Activated CD4-positive, alpha-beta memory T cell treated with anti-CD3 and anti-CD28 coated beads for 36 hours (primary cell): ENCODE measurements at regions of chr3 and their contacts with region 1.

Region 1: DNA sequence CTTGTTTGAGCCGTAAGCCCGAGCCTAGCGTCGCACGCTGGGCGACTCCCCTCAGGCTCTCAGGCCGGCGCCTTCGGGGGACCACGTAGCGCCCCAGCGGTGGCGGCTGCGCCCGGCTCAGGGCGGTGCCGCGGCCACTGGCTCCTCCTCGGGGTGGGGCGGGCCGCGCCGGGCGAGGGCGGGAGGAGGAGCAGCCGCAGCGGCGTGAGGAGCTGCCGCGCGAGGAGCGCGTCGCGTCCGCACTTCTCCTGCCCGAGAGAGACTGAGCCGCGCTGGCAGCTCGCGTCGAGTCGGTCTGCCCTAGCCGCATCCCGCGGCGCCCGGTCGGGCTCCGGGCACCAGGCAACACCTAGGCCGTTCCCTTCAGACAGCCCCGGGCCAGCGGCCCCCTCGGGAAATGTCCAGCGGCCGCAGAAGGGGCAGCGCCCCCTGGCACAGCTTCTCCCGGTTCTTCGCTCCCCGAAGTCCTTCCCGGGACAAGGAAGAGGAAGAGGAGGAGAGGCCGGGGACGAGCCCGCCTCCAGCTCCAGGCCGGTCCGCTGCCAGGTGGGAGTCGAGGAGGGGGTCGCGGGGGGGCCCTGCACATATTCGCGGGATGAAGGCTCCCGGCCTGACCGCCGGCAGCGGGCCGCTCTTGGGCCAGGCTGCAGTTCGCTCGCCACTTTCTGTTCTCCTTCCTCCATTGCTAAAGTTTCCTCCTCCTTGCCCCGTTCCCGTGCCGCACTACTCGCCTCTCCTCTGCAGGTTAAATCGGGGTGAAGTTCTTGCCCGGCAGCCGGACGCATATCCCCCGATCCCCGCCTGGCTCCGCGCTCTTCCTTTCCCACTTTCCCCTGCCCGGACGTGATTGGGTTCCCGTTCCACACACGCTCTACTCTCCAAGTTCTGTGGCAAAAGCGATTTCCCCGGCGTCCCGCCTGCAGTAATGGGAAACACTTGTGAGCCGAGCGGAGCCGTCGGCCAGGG is at the start of gene CRYBG3:
- DNase-seq: peak; percentile 88
- H3K4me3 Mint-ChIP-seq: peak within 1 kb of the TSS; percentile 89
- H3K27ac Mint-ChIP-seq: peak within 1 kb of the TSS; percentile 36
- H3K4me1 Mint-ChIP-seq: peaks cover 15% of the 10 kb centered on the region
- H3K27me3 Mint-ChIP-seq: peaks cover 9% of the 10 kb centered on the region
- total RNA-seq, gene CRYBG3: 6.4 to 6.9 TPM

Region 2: GRCh38 chr3:97764407-97765238 is 57.5 kb before region 1 on chr3 and contains the start of gene ARL6:
- CTCF ChIA-PET with region 1: no interaction called
- POLR2A ChIA-PET with region 1: interaction called, 6 read pairs
- intact Hi-C with region 1: loop called (anchors 2 kb)
- DNase-seq: peak; percentile 81
- H3K4me3 Mint-ChIP-seq: peak within 1 kb of the TSS; percentile 98
- H3K27ac Mint-ChIP-seq: peak within 1 kb of the TSS; percentile 94
- H3K4me1 Mint-ChIP-seq: peaks cover 21% of the 10 kb centered on the region
- H3K27me3 Mint-ChIP-seq: no peaks in the 10 kb centered on the region
- total RNA-seq, gene ARL6: 3.9 to 6.1 TPM

Region 3: DNA sequence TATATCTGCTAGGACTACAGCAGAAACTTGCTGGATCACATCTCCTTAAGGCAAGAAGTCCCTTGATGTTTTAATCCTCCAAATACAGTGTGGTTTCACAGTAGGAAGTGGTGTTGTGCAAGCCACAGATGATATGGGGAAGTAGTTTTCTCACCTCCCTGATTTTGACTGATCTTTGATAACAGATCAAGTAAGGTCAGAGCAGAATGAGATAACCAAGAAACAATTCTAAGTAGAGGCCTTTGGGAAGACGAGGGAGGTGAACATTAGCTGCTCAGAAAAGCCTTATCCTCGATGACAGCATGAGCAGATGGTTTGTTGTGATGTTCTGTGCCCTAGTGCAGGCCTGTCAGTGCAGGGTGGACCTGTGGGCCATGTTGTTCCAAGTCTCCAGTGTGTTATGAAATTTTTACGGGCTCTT is 88.8 kb after region 1 on chr3:
- CTCF ChIA-PET with region 1: no interaction called
- POLR2A ChIA-PET with region 1: no interaction called
- intact Hi-C with region 1: loop called (anchors 2 kb)
- DNase-seq: no peak
- H3K4me3 Mint-ChIP-seq: peak overlapping the region; percentile 77
- H3K27ac Mint-ChIP-seq: peak overlapping the region; percentile 88
- H3K4me1 Mint-ChIP-seq: peaks cover 28% of the 10 kb centered on the region
- H3K27me3 Mint-ChIP-seq: no peaks in the 10 kb centered on the region